CD8-positive, alpha-beta memory T cell (primary cell): ENCODE measurements at regions of chr2 and their contacts with region 1.

Region 1: DNA sequence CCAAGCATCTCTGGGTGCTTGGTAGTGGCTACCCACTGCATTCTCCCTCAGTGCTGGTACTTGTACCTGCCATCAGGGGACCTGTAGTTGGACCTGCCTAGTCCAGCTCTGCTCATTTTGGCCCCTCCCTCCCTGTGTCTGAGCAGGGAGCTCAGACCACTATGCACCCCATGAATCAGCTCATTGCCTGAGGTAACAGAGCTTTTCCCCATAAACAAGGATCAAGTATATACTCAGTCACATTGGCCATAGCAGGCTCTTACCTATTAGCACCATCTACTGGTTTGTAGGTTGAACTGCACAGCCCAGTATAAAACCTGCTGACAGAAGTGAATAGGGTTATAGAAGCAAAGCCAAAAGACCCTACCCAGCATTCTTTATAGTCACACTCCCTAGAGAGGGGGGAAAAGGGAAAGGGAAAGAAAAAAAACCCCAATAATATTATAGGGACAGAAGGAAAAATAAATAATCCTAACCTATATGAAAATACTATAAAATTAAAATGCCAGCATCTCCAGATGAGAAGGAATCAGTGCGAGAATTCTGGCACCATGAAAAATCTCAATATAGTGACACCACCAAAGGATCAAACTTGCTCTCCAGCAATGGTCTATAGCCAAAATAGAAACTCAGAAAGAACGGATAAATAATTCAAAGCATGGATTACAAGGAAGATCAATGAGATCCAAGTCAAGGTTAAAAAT is 6.9 kb upstream of the FLACC1 start:
- DNase-seq: peak in 3 of 5 donors; percentile 8 to 60 (median 38)
- H3K4me3 ChIP-seq: no peak overlapping the region
- H3K4me3 Mint-ChIP-seq: peak overlapping the region in 1 of 7 donors; percentile 68
- H3K27ac ChIP-seq: no peak overlapping the region
- H3K27ac Mint-ChIP-seq: peak overlapping the region in 3 of 8 donors; percentile 32 to 72 (median 36)
- H3K4me1 ChIP-seq: peaks cover 15% of the 10 kb centered on the region
- H3K4me1 Mint-ChIP-seq: peaks cover 25 to 47% (median 35%) of the 10 kb centered on the region in 3 donors
- H3K27me3 ChIP-seq: no peaks in the 10 kb centered on the region
- H3K27me3 Mint-ChIP-seq: no peaks in the 10 kb centered on the region

Region 2: GRCh38 chr2:201267278-201268030 is 96.6 kb before region 1 on chr2:
- CTCF ChIA-PET with region 1: interaction called, 10 read pairs
- POLR2A ChIA-PET with region 1: no interaction called
- DNase-seq: no peak
- H3K4me3 ChIP-seq: no peak overlapping the region
- H3K4me3 Mint-ChIP-seq: peak overlapping the region; percentile 69 to 93 (median 87)
- H3K27ac ChIP-seq: peak overlapping the region; percentile 17
- H3K27ac Mint-ChIP-seq: peak overlapping the region; percentile 59 to 91 (median 88)
- H3K4me1 ChIP-seq: peaks cover 89% of the 10 kb centered on the region
- H3K4me1 Mint-ChIP-seq: peaks cover 89 to 95% (median 94%) of the 10 kb centered on the region in 3 donors
- H3K27me3 ChIP-seq: no peaks in the 10 kb centered on the region
- H3K27me3 Mint-ChIP-seq: no peaks in the 10 kb centered on the region